Right ventricle myocardium superior (tissue), 1 donor: ENCODE measurements at regions of chr6 and their contacts with region 1.

Region 1: DNA sequence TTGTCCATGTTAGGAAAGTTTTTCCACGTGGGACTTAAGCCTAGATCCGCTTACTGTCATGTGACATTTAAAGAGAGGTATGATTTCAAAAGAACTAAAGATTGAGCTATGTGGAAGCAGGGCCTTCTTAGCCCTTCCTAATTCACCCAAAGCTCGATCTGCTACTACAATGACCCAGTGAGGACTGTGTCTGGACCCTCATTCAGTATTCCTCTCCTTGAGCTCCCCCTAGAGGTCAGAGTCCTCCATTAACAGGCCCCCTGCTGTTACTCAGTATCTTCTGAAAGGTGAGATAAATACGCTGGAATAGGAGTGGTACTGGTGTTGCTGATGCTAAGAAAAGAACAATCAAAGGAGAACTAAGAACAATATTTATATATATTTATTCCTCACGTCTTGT is 414.0 kb downstream of the GJA1 start:
- DNase-seq: no peak
- ATAC-seq: peak; percentile 82

Region 2: GRCh38 chr6:121881974-121882667 is 32.6 kb after region 1 on chr6:
- intact Hi-C with region 1: no loop called
- DNase-seq: no peak
- ATAC-seq: no peak

Region 3: DNA sequence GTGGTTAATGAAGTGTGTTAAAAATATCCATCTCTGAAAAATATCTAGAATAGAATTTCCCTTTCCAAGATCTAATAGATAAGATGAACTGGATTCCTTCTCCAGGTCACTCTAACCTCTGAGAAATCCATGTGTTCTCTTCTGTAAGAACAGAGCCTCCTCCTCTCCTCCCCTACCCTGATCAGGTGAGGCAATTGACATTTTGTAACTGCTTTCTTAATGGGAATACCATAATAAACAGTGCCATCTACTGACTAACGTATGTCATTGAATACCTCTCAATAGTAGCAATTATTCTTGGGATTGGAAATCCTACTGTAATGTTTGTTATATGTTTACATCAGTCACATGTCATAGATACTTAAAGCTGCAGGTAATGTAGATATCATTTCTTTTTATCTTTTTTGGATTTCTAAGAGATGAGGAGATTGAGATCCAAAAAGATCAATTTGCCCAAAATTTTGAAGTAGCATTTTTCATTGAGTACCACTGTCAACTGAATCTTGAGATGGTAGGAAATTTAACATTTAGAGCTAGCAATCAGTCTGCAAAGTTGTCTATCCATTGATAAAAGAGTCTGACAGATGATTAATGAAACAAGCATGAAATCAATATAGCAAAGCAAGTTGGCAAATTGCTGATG is 184.2 kb after region 1 on chr6:
- intact Hi-C with region 1: loop called (anchors 10 kb)
- DNase-seq: no peak
- ATAC-seq: peak; percentile 93

Region 4: DNA sequence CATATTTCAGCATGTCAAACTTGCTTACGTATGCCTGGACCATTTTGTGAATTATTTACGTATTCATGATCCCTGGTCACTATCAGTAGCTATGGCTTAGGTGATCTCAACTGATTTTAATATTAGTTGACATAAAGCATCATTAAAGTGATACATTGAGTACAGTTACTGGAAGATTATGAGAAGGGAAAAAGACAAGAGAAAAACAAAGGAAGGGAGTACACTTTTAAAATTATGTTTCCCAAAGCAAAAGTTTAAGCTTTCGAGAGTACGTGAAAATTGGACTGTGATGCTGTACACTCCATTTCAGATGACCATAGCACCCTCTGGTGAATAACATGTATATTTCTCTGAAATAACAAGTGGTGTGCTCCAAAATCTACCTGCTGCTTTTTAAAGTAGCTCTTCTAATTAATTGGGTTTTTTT is 334.9 kb after region 1 on chr6:
- intact Hi-C with region 1: loop called (anchors 10 kb)
- DNase-seq: no peak
- ATAC-seq: peak; percentile 84